ENCODE measurements at regions of chr10 and their contacts with region 1.

Region 1: GRCh38 chr10:17062955-17063484 is 66.6 kb downstream of the CUBN start:
- DNase-seq: no peak
- ATAC-seq: no peak
- H3K4me3 ChIP-seq: no peak overlapping the region
- H3K4me3 Mint-ChIP-seq: no peak overlapping the region
- H3K27ac ChIP-seq: no peak overlapping the region
- H3K27ac Mint-ChIP-seq: peak overlapping the region in 5 of 9 donors; percentile 20 to 83 (median 67)
- H3K4me1 ChIP-seq: peaks cover 0 to 6% of the 10 kb centered on the region in 2 donors
- H3K4me1 Mint-ChIP-seq: peaks cover 8 to 45% (median 39%) of the 10 kb centered on the region in 7 donors
- H3K27me3 ChIP-seq: no peaks in the 10 kb centered on the region
- H3K27me3 Mint-ChIP-seq: peaks cover 0 to 15% (median 0%) of the 10 kb centered on the region in 5 donors

Region 2: GRCh38 chr10:16639471-16639870 is 423.5 kb before region 1 on chr10:
- CTCF ChIA-PET with region 1: no interaction called
- POLR2A ChIA-PET with region 1: no interaction called
- intact Hi-C with region 1: no loop called
- DNase-seq: no peak
- ATAC-seq: no peak
- H3K4me3 ChIP-seq: no peak overlapping the region
- H3K4me3 Mint-ChIP-seq: no peak overlapping the region
- H3K27ac ChIP-seq: no peak overlapping the region
- H3K27ac Mint-ChIP-seq: no peak overlapping the region
- H3K4me1 ChIP-seq: no peaks in the 10 kb centered on the region
- H3K4me1 Mint-ChIP-seq: peaks cover 0 to 9% (median 0%) of the 10 kb centered on the region in 7 donors
- H3K27me3 ChIP-seq: no peaks in the 10 kb centered on the region
- H3K27me3 Mint-ChIP-seq: no peaks in the 10 kb centered on the region

Region 3: GRCh38 chr10:17155826-17156225 is 92.8 kb after region 1 on chr10:
- CTCF ChIA-PET with region 1: no interaction called
- POLR2A ChIA-PET with region 1: no interaction called
- intact Hi-C with region 1: loop called in 1 of 2 experiments (anchors 5 kb)
- DNase-seq: no peak
- ATAC-seq: no peak
- H3K4me3 ChIP-seq: no peak overlapping the region
- H3K4me3 Mint-ChIP-seq: no peak overlapping the region
- H3K27ac ChIP-seq: no peak overlapping the region
- H3K27ac Mint-ChIP-seq: no peak overlapping the region
- H3K4me1 ChIP-seq: no peaks in the 10 kb centered on the region
- H3K4me1 Mint-ChIP-seq: no peaks in the 10 kb centered on the region
- H3K27me3 ChIP-seq: no peaks in the 10 kb centered on the region
- H3K27me3 Mint-ChIP-seq: no peaks in the 10 kb centered on the region

Region 4: GRCh38 chr10:17199351-17199804 is 136.4 kb after region 1 on chr10:
- CTCF ChIA-PET with region 1: no interaction called
- POLR2A ChIA-PET with region 1: no interaction called
- intact Hi-C with region 1: no loop called
- DNase-seq: no peak
- ATAC-seq: no peak
- H3K4me3 ChIP-seq: no peak overlapping the region
- H3K4me3 Mint-ChIP-seq: peak overlapping the region; percentile 5 to 97 (median 44)
- H3K27ac ChIP-seq: no peak overlapping the region
- H3K27ac Mint-ChIP-seq: peak overlapping the region; percentile 9 to 98 (median 75)
- H3K4me1 ChIP-seq: peaks cover 0 to 6% of the 10 kb centered on the region in 2 donors
- H3K4me1 Mint-ChIP-seq: peaks cover 23 to 54% (median 38%) of the 10 kb centered on the region in 7 donors
- H3K27me3 ChIP-seq: no peaks in the 10 kb centered on the region
- H3K27me3 Mint-ChIP-seq: peaks cover 0 to 4% (median 0%) of the 10 kb centered on the region in 5 donors

Region 5: GRCh38 chr10:18918532-18918931 is 1855.5 kb after region 1 on chr10:
- CTCF ChIA-PET with region 1: no interaction called
- POLR2A ChIA-PET with region 1: no interaction called
- intact Hi-C with region 1: no loop called
- DNase-seq: no peak
- ATAC-seq: no peak
- H3K4me3 ChIP-seq: no peak overlapping the region
- H3K4me3 Mint-ChIP-seq: no peak overlapping the region
- H3K27ac ChIP-seq: no peak overlapping the region
- H3K27ac Mint-ChIP-seq: no peak overlapping the region
- H3K4me1 ChIP-seq: no peaks in the 10 kb centered on the region
- H3K4me1 Mint-ChIP-seq: no peaks in the 10 kb centered on the region
- H3K27me3 ChIP-seq: no peaks in the 10 kb centered on the region
- H3K27me3 Mint-ChIP-seq: no peaks in the 10 kb centered on the region

Measured in naive thymus-derived CD4-positive, alpha-beta T cell (primary cell).